Activated CD4-positive, alpha-beta memory T cell treated with anti-CD3 and anti-CD28 coated beads for 36 hours (primary cell): ENCODE measurements at regions of chr20 and their contacts with region 1.

Region 1: GRCh38 chr20:33679758-33680485 is 5.7 kb upstream of the NECAB3 start:
- DNase-seq: peak; percentile 79
- H3K4me3 Mint-ChIP-seq: no peak overlapping the region
- H3K27ac Mint-ChIP-seq: peak overlapping the region; percentile 80
- H3K4me1 Mint-ChIP-seq: peaks cover 69% of the 10 kb centered on the region
- H3K27me3 Mint-ChIP-seq: no peaks in the 10 kb centered on the region

Region 2: GRCh38 chr20:33719989-33720709 is 40.2 kb after region 1 on chr20 and contains the start of gene PXMP4:
- CTCF ChIA-PET with region 1: interaction called, 5 read pairs
- POLR2A ChIA-PET with region 1: interaction called, 8 read pairs
- intact Hi-C with region 1: loop called (anchors 1 kb)
- DNase-seq: peak; percentile 95
- H3K4me3 Mint-ChIP-seq: peak within 1 kb of the TSS; percentile 95
- H3K27ac Mint-ChIP-seq: peak within 1 kb of the TSS; percentile 75
- H3K4me1 Mint-ChIP-seq: peaks cover 23% of the 10 kb centered on the region
- H3K27me3 Mint-ChIP-seq: no peaks in the 10 kb centered on the region
- total RNA-seq, gene PXMP4: 8.7 to 11.6 TPM